Naive thymus-derived CD8-positive, alpha-beta T cell (primary cell): ENCODE measurements at regions of chr19 and their contacts with region 1.

Region 1: DNA sequence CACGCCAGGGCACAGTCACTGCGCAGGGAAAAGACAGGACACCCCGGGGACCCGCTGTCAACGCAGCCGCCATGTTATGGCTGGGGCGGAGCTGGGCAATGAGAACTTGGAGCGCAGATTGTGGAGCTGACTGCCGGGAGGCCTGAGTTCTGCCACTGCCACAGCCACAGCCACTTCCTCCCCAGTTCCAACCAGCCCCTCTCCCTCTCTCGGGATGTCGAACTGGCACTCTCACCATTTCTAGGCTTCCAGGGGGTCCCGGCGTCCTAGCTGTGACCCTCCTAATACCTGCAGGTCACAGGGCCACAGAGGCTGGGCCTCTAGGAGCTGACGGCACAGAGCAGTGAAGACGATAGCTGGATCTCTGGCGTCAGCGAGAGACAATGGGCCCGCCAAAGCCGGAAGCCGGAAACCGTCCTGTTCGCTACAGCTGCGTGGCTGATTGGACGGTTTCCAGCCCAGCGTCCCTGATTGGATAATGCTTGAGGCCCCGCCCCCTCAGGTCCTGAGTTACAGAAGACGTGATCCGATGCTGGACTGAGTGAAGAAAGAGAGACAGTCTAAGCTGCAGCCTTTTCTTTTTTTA is at the start of gene ZNF506:
- DNase-seq: peak; percentile 91 to 99 (median 98)
- ATAC-seq: peak; percentile 81 to 82
- H3K4me3 Mint-ChIP-seq: peak within 1 kb of the TSS; percentile 99 to 100 (median 100)
- H3K27ac Mint-ChIP-seq: peak within 1 kb of the TSS; percentile 98 to 100 (median 100)
- H3K4me1 Mint-ChIP-seq: peaks cover 6 to 48% (median 37%) of the 10 kb centered on the region in 4 donors
- H3K27me3 Mint-ChIP-seq: no peaks in the 10 kb centered on the region
- polyA plus RNA-seq, gene ZNF506: 23.4 to 29.6 (median 27.8) TPM

Region 2: DNA sequence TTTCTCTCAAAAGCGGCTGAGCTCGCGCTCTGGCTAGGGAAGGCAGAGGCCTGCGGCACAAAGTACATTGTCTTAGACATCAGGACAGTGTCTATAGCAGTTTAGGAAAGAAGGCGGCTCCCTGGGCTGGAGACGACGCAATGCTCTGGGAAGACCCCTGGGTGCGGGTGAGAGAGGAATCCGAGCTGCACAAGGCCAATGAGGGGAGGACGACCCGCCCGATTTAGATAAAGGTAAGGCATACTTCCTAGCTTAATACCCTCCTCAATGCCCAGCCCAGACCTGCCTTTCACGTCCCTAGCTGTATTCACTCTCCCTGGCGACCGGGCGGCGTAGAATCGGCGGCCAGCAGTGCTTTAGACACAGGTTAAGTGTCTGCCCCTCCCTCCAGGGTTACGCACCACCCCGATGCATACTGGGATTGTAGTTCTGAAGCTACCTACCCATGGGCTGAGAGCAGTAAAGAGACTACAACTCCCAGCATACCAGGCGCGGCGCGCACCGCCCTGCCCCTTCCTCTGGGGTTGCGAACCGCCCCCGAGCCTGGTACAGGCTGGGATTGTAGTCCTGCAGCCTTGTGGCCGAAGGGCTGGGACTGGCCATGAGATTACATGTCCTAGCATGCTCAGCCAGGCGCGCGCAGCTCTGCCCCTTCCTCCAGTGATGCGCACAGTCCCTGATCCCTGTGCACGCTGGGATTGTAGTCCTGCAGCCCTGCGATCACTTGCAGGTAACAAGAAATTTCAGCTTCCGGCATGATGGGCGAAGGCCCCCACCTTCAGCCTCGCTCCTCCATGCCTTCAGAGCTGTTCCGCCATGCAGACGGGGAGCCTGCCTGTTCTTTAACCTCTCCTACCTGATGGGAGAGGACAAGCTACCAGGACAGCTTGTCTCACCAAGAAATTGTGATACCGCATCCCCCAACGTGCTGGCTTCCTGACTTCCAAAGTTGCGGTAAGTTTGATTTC is 45.1 kb before region 1 on chr19:
- POLR2A ChIA-PET with region 1: interaction called, 60 read pairs
- DNase-seq: peak; percentile 80 to 94 (median 91)
- ATAC-seq: peak; percentile 97 to 98
- H3K4me3 Mint-ChIP-seq: peak overlapping the region; percentile 94 to 100 (median 99)
- H3K27ac Mint-ChIP-seq: peak overlapping the region; percentile 95 to 99 (median 96)
- H3K4me1 Mint-ChIP-seq: peaks cover 21 to 65% (median 58%) of the 10 kb centered on the region in 4 donors
- H3K27me3 Mint-ChIP-seq: no peaks in the 10 kb centered on the region

Region 3: GRCh38 chr19:19860756-19861390 is 39.4 kb after region 1 on chr19:
- POLR2A ChIA-PET with region 1: interaction called, 136 read pairs
- DNase-seq: peak; percentile 30 to 90 (median 68)
- ATAC-seq: peak; percentile 63 to 65
- H3K4me3 Mint-ChIP-seq: peak overlapping the region; percentile 69 to 87 (median 80)
- H3K27ac Mint-ChIP-seq: peak overlapping the region in 9 of 10 donors; percentile 4 to 87 (median 71)
- H3K4me1 Mint-ChIP-seq: peaks cover 0 to 20% (median 10%) of the 10 kb centered on the region in 4 donors
- H3K27me3 Mint-ChIP-seq: peaks cover 0 to 3% (median 0%) of the 10 kb centered on the region in 5 donors

Region 4: GRCh38 chr19:19871932-19872331 is 50.5 kb after region 1 on chr19:
- POLR2A ChIA-PET with region 1: interaction called, 136 read pairs
- DNase-seq: no peak
- ATAC-seq: no peak
- H3K4me3 Mint-ChIP-seq: peak overlapping the region in 3 of 10 donors; percentile 8 to 22 (median 14)
- H3K27ac Mint-ChIP-seq: peak overlapping the region in 6 of 10 donors; percentile 35 to 90 (median 76)
- H3K4me1 Mint-ChIP-seq: peaks cover 16 to 62% (median 44%) of the 10 kb centered on the region in 4 donors
- H3K27me3 Mint-ChIP-seq: no peaks in the 10 kb centered on the region